ENCODE measurements at regions of chr20 and their contacts with region 1.

Region 1: GRCh38 chr20:48772362-48773015 is 55.3 kb downstream of the PREX1 start:
- DNase-seq: peak; percentile 93 to 99 (median 98)
- H3K4me3 ChIP-seq: peak overlapping the region in 1 of 7 experiments; percentile 23
- H3K27ac ChIP-seq: no peak overlapping the region
- H3K4me1 ChIP-seq: peaks cover 10 to 82% (median 69%) of the 10 kb centered on the region in 4 experiments
- H3K27me3 ChIP-seq: no peaks in the 10 kb centered on the region

Region 2: DNA sequence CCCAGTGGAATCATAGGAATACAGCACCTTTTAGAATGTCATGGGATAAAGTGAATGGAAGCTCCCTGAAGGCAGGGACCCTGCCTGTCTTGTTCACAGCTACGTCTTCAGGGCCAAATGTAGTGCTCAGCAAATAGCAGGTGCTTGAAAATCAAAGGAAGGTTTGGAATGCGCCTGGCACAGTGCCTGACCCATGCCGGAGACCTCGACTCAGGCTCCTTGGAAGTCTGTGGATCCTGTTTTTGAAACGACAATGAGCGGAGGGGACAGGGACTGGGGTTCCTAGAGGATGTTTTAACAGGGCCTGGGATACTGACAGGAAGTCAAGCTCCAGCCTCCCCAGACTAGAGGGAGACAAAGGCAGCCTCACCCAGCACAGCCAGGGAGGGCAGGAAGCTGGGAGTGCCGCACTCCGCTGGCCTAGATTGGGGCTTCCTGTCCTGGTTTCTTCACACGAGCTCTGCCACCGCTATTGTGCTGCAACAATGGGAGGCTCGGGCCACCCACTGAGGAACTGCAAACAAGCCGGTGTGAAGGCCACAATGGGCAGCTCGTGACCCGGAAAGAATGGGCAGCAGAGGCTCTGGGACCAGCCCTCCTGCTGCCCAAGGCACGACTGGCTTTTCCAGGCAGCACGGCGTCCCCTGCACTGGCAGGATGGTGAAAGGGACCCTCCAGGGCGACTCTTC is 21.4 kb before region 1 on chr20:
- CTCF ChIA-PET with region 1: interaction called, 13 read pairs
- POLR2A ChIA-PET with region 1: interaction called, 3 read pairs
- DNase-seq: peak in 2 of 3 donors; percentile 49 to 62
- H3K4me3 ChIP-seq: peak overlapping the region in 1 of 7 experiments; percentile 48
- H3K27ac ChIP-seq: peak overlapping the region; percentile 40 to 44
- H3K4me1 ChIP-seq: peaks cover 13 to 64% (median 58%) of the 10 kb centered on the region in 4 experiments
- H3K27me3 ChIP-seq: no peaks in the 10 kb centered on the region

Region 3: GRCh38 chr20:48787861-48788375 is 15.4 kb after region 1 on chr20:
- CTCF ChIA-PET with region 1: interaction called, 7 read pairs
- POLR2A ChIA-PET with region 1: interaction called, 14 read pairs
- DNase-seq: peak; percentile 82 to 93 (median 88)
- H3K4me3 ChIP-seq: peak overlapping the region in 5 of 7 experiments; percentile 20 to 59 (median 47)
- H3K27ac ChIP-seq: peak overlapping the region; percentile 80 to 86
- H3K4me1 ChIP-seq: peaks cover 18 to 90% (median 84%) of the 10 kb centered on the region in 4 experiments
- H3K27me3 ChIP-seq: no peaks in the 10 kb centered on the region

Region 4: GRCh38 chr20:48858075-48858790 is 85.7 kb after region 1 on chr20:
- CTCF ChIA-PET with region 1: no interaction called
- POLR2A ChIA-PET with region 1: no interaction called
- DNase-seq: no peak
- H3K4me3 ChIP-seq: no peak overlapping the region
- H3K27ac ChIP-seq: no peak overlapping the region
- H3K4me1 ChIP-seq: peaks cover 7 to 83% (median 62%) of the 10 kb centered on the region in 4 experiments
- H3K27me3 ChIP-seq: no peaks in the 10 kb centered on the region